Endothelial cell of umbilical vein (primary cell): ENCODE measurements at regions of chr7 and their contacts with region 1.

Region 1: DNA sequence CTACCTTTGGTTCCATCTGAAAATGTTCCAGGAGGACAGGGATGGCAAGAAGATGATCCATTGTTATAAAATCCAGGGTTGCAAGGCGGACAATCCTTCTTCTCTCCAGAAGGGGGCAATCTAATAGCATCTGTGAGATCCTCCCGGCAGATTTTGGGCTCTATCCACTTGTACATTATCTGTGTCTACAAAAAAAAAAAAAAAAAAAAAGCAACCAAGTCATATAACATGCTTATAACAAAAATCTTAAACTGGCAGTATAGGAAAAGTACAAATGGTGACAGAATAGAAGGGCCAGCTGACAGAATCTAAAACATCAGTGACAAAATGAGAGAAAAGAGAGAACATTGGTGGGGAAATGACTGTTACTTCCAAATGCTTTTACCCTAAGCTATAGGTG is 132.7 kb downstream of the ELAPOR2 start:
- DNase-seq: peak; percentile 58
- H3K4me3 ChIP-seq: no peak overlapping the region
- H3K27ac ChIP-seq: no peak overlapping the region
- H3K4me1 ChIP-seq: peaks cover 5% of the 10 kb centered on the region
- H3K27me3 ChIP-seq: no peaks in the 10 kb centered on the region
- CTCF ChIP-seq: peak; percentile 60 to 65
- POLR2A ChIP-seq: no peak

Region 2: DNA sequence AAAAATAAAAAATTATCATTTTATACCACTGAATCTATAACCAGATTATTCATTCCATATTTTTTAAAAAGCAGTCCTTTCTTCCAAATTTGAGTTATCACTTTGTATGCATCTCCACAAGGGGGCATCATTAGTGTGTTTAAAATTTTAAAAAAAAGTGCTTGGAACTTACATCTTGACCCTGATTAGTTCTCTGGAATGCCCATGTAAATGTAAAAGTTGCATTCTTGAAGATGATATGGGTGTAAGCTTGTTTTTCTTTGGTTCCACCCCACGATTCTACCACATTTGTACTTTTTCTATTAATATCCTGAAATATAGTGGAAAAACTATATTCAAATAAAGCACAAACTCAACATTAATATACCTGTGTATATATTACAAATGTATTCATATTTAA is 12.2 kb before region 1 on chr7:
- CTCF ChIA-PET with region 1: interaction called, 12 read pairs
- POLR2A ChIA-PET with region 1: no interaction called
- dilution Hi-C with region 1: no loop called
- intact Hi-C with region 1: no loop called
- DNase-seq: peak; percentile 30
- H3K4me3 ChIP-seq: no peak overlapping the region
- H3K27ac ChIP-seq: no peak overlapping the region
- H3K4me1 ChIP-seq: no peaks in the 10 kb centered on the region
- H3K27me3 ChIP-seq: no peaks in the 10 kb centered on the region
- CTCF ChIP-seq: peak; percentile 28 to 39
- POLR2A ChIP-seq: no peak

Region 3: GRCh38 chr7:86939197-86939814 is 12.6 kb after region 1 on chr7:
- CTCF ChIA-PET with region 1: interaction called, 10 read pairs
- POLR2A ChIA-PET with region 1: no interaction called
- dilution Hi-C with region 1: no loop called
- intact Hi-C with region 1: no loop called
- DNase-seq: peak; percentile 87
- H3K4me3 ChIP-seq: no peak overlapping the region
- H3K27ac ChIP-seq: peak overlapping the region; percentile 24
- H3K4me1 ChIP-seq: no peaks in the 10 kb centered on the region
- H3K27me3 ChIP-seq: no peaks in the 10 kb centered on the region
- CTCF ChIP-seq: peak; percentile 46 to 57
- POLR2A ChIP-seq: no peak

Region 4: GRCh38 chr7:87219545-87220025 is 292.9 kb after region 1 on chr7 and contains the start of gene TMEM243:
- CTCF ChIA-PET with region 1: interaction called, 6 read pairs
- POLR2A ChIA-PET with region 1: no interaction called
- dilution Hi-C with region 1: no loop called
- intact Hi-C with region 1: loop called (anchors 5 kb)
- DNase-seq: peak; percentile 87
- H3K4me3 ChIP-seq: peak within 1 kb of the TSS; percentile 32 to 76 (median 63)
- H3K27ac ChIP-seq: peak within 1 kb of the TSS; percentile 59
- H3K4me1 ChIP-seq: peaks cover 18% of the 10 kb centered on the region
- H3K27me3 ChIP-seq: peaks cover 3 to 13% of the 10 kb centered on the region in 2 experiments
- CTCF ChIP-seq: peak in 1 of 2 donors; percentile 8
- POLR2A ChIP-seq: peak; percentile 35
- total RNA-seq, gene TMEM243: 26.9 and 31.5 TPM in 2 replicates

Region 5: GRCh38 chr7:87231256-87231655 is 304.5 kb after region 1 on chr7:
- CTCF ChIA-PET with region 1: interaction called, 6 read pairs
- POLR2A ChIA-PET with region 1: no interaction called
- dilution Hi-C with region 1: no loop called
- intact Hi-C with region 1: loop called (anchors 2 kb)
- DNase-seq: no peak
- H3K4me3 ChIP-seq: no peak overlapping the region
- H3K27ac ChIP-seq: no peak overlapping the region
- H3K4me1 ChIP-seq: no peaks in the 10 kb centered on the region
- H3K27me3 ChIP-seq: peaks cover 2 to 21% of the 10 kb centered on the region in 2 experiments
- CTCF ChIP-seq: no peak
- POLR2A ChIP-seq: no peak